Right ventricle myocardium superior (tissue), 1 donor: ENCODE measurements at regions of chr7 and their contacts with region 1.

Region 1: GRCh38 chr7:93055543-93056107 is 62.2 kb downstream of the SAMD9 start:
- DNase-seq: no peak
- ATAC-seq: peak; percentile 57

Region 2: GRCh38 chr7:92614660-92615174 is 440.9 kb before region 1 on chr7:
- intact Hi-C with region 1: loop called (anchors 5 kb)
- DNase-seq: no peak
- ATAC-seq: peak; percentile 72

Region 3: DNA sequence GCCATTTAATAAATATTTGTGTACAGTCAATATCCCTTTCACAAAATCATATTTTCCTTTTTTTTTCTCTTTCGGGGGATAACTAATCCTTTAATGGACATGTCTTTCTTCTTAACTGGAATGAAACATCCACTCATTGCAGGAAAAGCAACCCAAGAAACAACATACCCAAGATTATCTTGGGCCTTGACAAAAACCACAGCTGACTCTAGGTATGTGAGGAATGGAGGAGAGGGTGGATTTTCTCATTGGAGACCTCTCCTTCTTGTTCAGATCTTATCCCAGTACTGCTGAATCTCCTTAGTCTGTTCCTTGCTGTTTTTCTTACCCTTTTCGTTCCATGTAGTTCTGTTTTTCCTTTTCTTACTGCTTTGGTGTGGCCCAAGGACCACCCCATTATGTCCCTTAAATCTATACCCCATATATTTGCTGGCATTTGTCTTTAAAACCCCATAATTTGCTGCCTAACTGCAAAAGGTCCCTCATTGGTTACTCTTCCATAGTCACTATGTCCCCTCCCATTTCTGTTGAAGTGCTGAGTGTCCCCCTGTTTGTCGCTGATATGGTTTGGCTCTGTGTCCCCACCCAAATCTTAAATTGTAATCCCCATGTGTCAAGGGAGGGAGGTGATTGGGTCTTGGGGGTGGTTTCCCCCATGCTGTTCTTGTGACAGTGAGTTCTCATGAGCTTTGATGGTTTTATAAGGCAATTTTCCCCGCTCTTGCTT is 212.4 kb before region 1 on chr7:
- intact Hi-C with region 1: loop called (anchors 10 kb)
- DNase-seq: no peak
- ATAC-seq: no peak